ENCODE measurements at regions of chr10 and their contacts with region 1.

Region 1: GRCh38 chr10:70272925-70273316 is 10.9 kb downstream of the NPFFR1 start:
- DNase-seq: peak; percentile 52 to 75 (median 72)
- H3K4me3 ChIP-seq: peak overlapping the region in 1 of 7 experiments; percentile 8
- H3K27ac ChIP-seq: no peak overlapping the region
- H3K4me1 ChIP-seq: peaks cover 0 to 2% (median 0%) of the 10 kb centered on the region in 4 experiments
- H3K27me3 ChIP-seq: peaks cover 0 to 19% (median 0%) of the 10 kb centered on the region in 5 experiments

Region 2: DNA sequence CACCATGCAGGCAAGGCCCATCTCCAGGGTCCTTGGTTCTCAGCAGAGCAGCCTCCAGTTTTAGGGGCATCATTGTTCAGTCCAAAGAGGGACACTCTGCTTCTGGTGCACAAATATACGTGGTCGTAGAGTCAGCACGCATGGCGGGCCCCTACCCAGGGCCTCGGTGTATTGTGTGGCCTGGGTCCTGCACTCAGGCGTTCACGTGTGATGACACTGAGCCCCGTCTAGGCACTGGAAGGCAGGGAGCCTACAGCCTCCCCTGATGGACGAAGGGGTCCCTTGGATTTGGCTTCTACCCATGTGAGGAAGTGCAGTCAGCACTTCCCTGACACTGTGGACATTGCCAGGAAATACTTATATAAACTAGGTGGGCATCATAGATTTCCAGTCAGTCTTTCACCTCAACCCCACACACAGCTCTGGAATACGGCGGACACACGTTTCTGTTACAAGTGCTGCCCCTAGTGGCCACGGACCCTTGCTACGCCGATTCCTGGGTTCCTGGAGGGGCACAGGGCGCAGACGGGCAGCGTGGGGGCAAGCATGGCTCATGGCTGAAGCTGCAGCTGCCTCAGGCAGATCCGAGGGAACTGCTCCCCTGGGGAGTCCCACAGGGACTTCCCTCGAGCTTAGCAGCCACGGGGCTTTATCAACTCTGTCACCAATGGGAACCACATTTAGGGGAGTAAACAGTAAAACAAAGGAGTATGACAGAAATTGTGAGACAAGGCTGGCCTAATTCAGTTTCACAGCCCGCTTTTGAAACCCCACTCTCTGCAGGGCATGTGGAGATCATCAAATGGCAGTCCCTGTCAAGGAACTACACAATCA is 165.7 kb before region 1 on chr10:
- CTCF ChIA-PET with region 1: no interaction called
- POLR2A ChIA-PET with region 1: no interaction called
- DNase-seq: peak in 2 of 3 donors; percentile 10 to 17
- H3K4me3 ChIP-seq: no peak overlapping the region
- H3K27ac ChIP-seq: no peak overlapping the region
- H3K4me1 ChIP-seq: no peaks in the 10 kb centered on the region
- H3K27me3 ChIP-seq: no peaks in the 10 kb centered on the region

Region 3: DNA sequence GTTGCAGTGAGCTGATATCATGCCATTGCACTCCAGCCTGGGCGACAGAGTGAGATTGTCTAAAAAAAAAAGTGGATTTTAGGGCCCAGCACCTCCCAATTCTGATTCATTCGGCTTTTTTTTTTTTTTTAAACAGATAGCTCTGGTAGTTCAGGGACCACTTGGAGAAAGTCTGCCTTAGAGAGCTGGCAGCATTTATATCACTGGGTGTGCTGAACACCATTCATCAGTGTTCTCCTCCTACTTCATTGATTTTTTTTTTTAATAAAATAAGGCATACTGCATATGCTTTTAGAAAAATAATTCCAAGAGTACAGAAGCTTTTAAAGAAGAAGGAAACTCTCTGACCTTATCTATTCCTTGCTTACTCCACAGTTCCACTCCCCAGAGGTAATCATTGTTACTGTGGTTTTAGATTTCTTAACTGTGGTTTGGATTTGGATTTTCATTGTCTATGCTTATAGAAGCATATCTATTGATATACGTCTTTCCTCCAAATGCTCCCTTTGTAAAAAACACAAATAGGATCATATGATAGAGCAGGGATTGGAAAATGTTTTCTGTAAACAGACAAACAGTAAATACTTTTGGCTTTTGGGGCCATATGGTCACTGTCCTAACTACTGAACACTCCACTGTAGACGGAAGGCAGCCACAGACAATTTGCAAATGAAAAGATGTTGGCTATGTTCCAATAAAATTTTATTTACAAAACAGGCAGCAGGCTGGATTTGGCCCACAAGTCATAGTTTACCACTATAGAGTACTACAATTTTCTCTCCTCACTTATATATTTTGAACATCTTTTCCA is 81.6 kb before region 1 on chr10:
- CTCF ChIA-PET with region 1: no interaction called
- POLR2A ChIA-PET with region 1: no interaction called
- DNase-seq: no peak
- H3K4me3 ChIP-seq: no peak overlapping the region
- H3K27ac ChIP-seq: no peak overlapping the region
- H3K4me1 ChIP-seq: peaks cover 0 to 7% (median 3%) of the 10 kb centered on the region in 4 experiments
- H3K27me3 ChIP-seq: peaks cover 0 to 9% (median 2%) of the 10 kb centered on the region in 5 experiments

Region 4: DNA sequence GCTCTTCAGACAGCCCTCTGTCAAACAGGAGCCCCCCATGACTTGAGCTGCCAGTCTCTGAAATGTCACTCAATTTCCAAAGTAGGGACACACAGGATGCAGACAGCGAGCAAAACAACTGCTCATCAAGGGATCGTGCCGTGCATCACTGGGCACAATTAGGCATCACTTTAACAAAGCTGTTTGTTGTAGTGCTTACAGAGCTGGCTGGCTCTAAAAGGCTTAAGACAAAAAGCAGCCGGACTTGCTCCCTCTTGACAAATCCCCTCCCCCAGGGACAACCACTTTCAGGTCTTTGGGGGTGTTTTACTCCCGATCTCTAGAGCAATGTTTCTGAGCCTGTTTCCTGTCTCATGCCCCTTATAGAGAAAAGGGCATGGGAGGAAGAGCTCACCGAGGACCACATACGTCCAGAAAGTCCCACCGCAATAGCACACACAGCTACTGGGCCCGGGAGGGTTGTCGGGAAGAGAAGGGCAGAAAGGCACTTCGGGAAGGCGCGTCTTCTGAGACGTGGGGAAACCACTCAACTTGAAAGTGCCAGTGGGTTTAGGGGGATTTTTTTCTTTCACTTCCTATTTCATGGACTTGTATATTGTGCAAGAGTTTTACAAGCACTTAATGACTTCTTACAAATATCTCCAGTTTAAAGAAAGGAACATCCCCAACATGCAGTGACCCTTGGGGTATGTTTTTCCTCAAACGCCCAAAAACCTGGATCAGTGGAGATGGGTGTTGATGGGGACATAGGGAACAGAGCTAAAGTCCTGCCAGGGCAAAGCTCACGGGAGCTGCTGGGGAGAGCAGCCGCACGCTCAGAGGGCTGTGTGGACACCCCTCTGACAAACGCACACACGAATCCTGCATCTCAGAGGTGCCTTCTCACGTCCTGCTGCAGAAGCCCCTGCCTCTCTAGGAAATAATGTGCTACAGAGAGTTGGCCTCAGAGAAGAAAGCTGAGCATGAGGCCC is 82.4 kb after region 1 on chr10:
- CTCF ChIA-PET with region 1: interaction called, 59 read pairs
- POLR2A ChIA-PET with region 1: no interaction called
- DNase-seq: peak; percentile 34 to 68 (median 66)
- H3K4me3 ChIP-seq: peak overlapping the region in 3 of 7 experiments; percentile 22 to 71 (median 42)
- H3K27ac ChIP-seq: no peak overlapping the region
- H3K4me1 ChIP-seq: peaks cover 0 to 19% (median 8%) of the 10 kb centered on the region in 4 experiments
- H3K27me3 ChIP-seq: peaks cover 0 to 5% (median 0%) of the 10 kb centered on the region in 5 experiments

Measured in common myeloid progenitor, CD34-positive (primary cell).